IMR-90 (cell line): ENCODE measurements at regions of chr10 and their contacts with region 1.

Region 1: DNA sequence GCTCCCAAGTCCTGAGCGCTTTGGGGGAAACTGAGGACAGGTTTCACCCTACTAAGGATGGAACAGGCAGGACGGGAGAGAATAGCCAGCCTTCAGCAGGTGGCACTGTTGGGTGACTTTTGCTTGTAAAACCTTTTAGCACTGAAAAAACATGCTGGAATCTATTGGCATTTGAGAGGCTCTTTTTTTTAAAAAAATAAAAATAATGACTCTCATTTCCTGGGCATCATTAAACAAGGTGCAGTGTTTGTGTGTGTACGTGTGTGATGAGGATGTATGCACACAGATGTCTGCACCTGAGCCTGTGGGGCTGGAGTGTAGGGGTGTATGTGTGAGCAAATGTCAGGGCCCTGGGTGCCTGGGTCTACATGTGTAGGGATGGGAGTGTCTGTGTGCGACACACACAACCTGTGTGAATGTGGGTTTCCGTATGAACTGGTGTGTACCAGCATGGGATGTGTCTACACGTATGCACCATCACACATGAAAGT is 177.9 kb downstream of the RPS24 start:
- DNase-seq: peak; percentile 67
- ATAC-seq: peak; percentile 77
- H3K4me3 ChIP-seq: no peak overlapping the region
- H3K27ac ChIP-seq: no peak overlapping the region
- H3K4me1 ChIP-seq: peaks cover 12% of the 10 kb centered on the region
- H3K27me3 ChIP-seq: peaks cover 3% of the 10 kb centered on the region; the same call in 1 of the 2 replicates
- CTCF ChIP-seq: peak; percentile 81
- POLR2A ChIP-seq: no peak
- RAD21 ChIP-seq: peak; percentile 90

Region 2: GRCh38 chr10:78081292-78081691 is 130.3 kb before region 1 on chr10:
- CTCF ChIA-PET with region 1: no interaction called
- POLR2A ChIA-PET with region 1: no interaction called
- dilution Hi-C with region 1: no loop called
- in situ Hi-C with region 1: no loop called
- intact Hi-C with region 1: no loop called
- DNase-seq: no peak
- ATAC-seq: no peak
- H3K4me3 ChIP-seq: no peak overlapping the region
- H3K27ac ChIP-seq: no peak overlapping the region
- H3K4me1 ChIP-seq: no peaks in the 10 kb centered on the region
- H3K27me3 ChIP-seq: peaks cover 56% of the 10 kb centered on the region
- CTCF ChIP-seq: no peak
- POLR2A ChIP-seq: no peak
- RAD21 ChIP-seq: no peak

Region 3: GRCh38 chr10:78236416-78237015 is 24.9 kb after region 1 on chr10:
- CTCF ChIA-PET with region 1: no interaction called
- POLR2A ChIA-PET with region 1: no interaction called
- dilution Hi-C with region 1: no loop called
- in situ Hi-C with region 1: no loop called
- intact Hi-C with region 1: loop called (anchors 1 kb)
- DNase-seq: no peak
- ATAC-seq: no peak
- H3K4me3 ChIP-seq: no peak overlapping the region
- H3K27ac ChIP-seq: no peak overlapping the region
- H3K4me1 ChIP-seq: no peaks in the 10 kb centered on the region; the same call in 1 of the 2 replicates
- H3K27me3 ChIP-seq: no peaks in the 10 kb centered on the region
- CTCF ChIP-seq: no peak
- POLR2A ChIP-seq: no peak
- RAD21 ChIP-seq: no peak

Region 4: DNA sequence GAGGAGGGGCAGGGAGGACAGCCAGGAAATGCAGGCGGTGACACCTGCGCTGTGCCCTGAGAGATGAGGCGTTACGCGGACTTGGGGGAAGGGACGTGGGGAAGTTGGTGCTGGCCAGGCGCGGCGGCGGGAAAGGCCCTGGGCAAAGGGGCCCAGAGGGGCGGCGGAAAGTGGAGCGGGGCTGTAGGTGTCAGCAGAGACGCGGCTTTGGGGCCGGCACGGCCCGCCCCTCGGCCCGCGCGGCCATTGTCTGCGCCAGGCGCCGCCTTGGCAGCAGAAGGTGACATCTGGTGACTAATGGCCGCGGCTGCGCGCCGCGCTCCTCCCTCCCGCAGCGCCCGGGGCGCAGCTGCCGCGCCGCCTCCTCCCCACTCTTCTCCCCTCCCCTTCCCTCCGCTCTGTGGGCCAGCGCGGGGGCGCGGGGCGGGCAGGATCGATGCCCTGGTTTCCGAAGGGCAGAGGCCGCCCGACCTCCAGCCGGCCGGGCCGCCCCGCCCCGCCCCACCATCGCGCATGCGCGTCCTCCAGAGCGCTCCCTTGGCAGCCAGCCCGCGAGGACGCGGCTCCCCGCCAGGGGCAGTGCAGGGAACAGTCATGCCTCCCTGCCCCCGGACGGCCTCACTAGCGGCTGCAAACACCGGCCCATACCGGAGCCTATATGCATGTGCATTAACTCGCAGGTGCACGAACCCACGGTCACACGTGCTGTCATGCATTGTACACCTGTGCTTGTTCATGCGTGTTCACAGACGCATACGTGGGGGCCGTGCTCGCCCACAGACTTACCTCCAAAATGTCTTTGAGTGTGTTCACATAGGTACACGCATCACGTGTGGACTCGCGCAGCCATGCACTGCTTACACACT is 91.6 kb after region 1 on chr10:
- CTCF ChIA-PET with region 1: interaction called, 4 read pairs
- POLR2A ChIA-PET with region 1: no interaction called
- dilution Hi-C with region 1: no loop called
- in situ Hi-C with region 1: no loop called
- intact Hi-C with region 1: loop called (anchors 5 kb)
- DNase-seq: peak; percentile 85
- ATAC-seq: peak; percentile 100
- H3K4me3 ChIP-seq: peak overlapping the region; percentile 62
- H3K27ac ChIP-seq: peak overlapping the region; percentile 69
- H3K4me1 ChIP-seq: peaks cover 3% of the 10 kb centered on the region; the same call in 1 of the 2 replicates
- H3K27me3 ChIP-seq: 0 out of 2 replicates have a peak, but pooled peaks cover 2% of the 10 kb centered on the region
- CTCF ChIP-seq: peak; percentile 75
- POLR2A ChIP-seq: peak; percentile 63; the same call in 1 of the 2 replicates
- RAD21 ChIP-seq: peak; percentile 77

Region 5: DNA sequence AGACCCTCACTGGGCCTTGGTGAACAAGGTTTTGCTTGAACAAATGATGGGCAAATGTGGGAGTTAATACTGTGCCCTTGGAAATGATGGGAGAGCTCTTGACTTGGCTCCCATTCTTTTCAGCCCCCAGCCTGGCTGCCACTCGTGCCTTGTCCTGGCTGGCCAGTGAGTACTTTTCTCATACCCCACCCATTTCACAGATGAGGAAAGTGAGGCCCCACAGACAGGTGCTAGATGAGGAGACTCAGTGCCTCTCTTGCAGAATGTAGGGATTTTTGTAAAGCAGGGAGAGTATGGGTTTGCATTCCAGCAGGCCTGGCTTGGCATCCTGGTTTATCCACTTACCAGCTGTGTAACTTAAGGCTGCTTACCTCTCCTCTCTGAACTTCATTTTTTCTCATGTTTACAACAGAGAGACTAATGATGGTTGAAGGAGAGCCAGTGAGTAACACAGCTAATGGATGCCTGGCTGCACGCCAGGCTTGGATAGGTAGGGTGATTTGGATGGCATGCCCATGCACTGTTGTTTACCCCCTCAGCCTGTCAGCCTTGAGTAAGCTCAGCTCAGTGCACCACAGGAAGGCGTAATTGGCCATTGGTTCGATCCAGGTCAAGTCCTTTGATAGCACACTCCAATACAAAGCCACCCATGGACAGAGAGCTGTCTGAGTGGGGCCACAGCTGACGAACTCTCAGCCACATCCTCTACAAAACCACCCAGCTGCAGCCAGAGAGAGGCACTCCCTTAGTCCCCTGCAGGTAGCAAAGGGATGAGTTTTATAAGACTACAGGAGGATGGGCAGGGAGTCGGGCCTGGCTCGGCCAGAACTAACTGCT is 258.9 kb after region 1 on chr10:
- CTCF ChIA-PET with region 1: no interaction called
- POLR2A ChIA-PET with region 1: no interaction called
- dilution Hi-C with region 1: no loop called
- in situ Hi-C with region 1: no loop called
- intact Hi-C with region 1: no loop called
- DNase-seq: peak; percentile 18
- ATAC-seq: peak; percentile 27
- H3K4me3 ChIP-seq: no peak overlapping the region
- H3K27ac ChIP-seq: no peak overlapping the region
- H3K4me1 ChIP-seq: peaks cover 4% of the 10 kb centered on the region; the same call in 1 of the 2 replicates
- H3K27me3 ChIP-seq: no peaks in the 10 kb centered on the region
- CTCF ChIP-seq: no peak
- POLR2A ChIP-seq: no peak
- RAD21 ChIP-seq: no peak

Region 6: DNA sequence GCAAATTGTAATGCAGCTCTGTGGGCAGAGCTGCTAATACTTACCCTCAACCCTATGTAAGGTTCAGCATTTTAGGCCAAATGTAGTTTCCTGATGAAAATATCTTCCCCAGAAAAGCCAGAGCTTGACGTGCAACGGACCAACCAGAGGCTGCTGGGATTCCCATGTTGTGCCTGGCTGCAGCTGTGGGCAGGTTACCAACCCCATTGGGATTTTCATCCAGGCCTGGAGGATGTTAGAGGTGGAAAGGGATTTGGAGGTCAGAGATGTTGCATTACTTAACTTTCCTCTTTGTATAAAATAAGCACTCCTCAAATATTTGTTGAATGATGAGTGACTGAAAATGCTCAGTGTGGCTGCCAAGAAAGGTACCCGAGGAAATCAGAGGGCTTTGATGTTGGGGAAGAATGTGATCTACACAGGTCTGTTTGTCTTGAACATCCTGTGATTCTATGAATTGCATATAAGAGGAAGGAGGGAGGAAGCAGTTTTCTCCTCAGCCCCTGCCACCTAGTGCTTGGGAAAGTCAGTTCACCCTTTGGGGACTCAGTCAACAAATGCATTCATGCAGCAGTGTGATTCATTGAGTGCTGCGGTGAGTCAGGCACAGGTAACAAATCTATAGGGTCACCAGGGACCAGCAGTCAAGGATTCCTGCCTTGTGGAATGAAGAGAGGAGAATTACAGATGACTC is 309.3 kb after region 1 on chr10:
- CTCF ChIA-PET with region 1: no interaction called
- POLR2A ChIA-PET with region 1: no interaction called
- dilution Hi-C with region 1: no loop called
- in situ Hi-C with region 1: no loop called
- intact Hi-C with region 1: loop called (anchors 2 kb)
- DNase-seq: peak; percentile 65
- ATAC-seq: peak; percentile 72
- H3K4me3 ChIP-seq: no peak overlapping the region
- H3K27ac ChIP-seq: no peak overlapping the region
- H3K4me1 ChIP-seq: peaks cover 5% of the 10 kb centered on the region
- H3K27me3 ChIP-seq: no peaks in the 10 kb centered on the region; the same call in 1 of the 2 replicates
- CTCF ChIP-seq: peak; percentile 48
- POLR2A ChIP-seq: no peak
- RAD21 ChIP-seq: peak; percentile 62

Region 7: GRCh38 chr10:78657163-78657861 is 445.7 kb after region 1 on chr10:
- CTCF ChIA-PET with region 1: interaction called, 3 read pairs
- POLR2A ChIA-PET with region 1: no interaction called
- dilution Hi-C with region 1: no loop called
- in situ Hi-C with region 1: no loop called
- intact Hi-C with region 1: loop called (anchors 1 kb)
- DNase-seq: peak; percentile 43
- ATAC-seq: peak; percentile 88
- H3K4me3 ChIP-seq: no peak overlapping the region
- H3K27ac ChIP-seq: no peak overlapping the region
- H3K4me1 ChIP-seq: 0 out of 2 replicates have a peak, but pooled peaks cover 2% of the 10 kb centered on the region
- H3K27me3 ChIP-seq: peaks cover 5% of the 10 kb centered on the region; the same call in 1 of the 2 replicates
- CTCF ChIP-seq: peak; percentile 73
- POLR2A ChIP-seq: no peak
- RAD21 ChIP-seq: peak; percentile 78

Region 8: GRCh38 chr10:78972947-78973900 is 761.6 kb after region 1 on chr10:
- CTCF ChIA-PET with region 1: no interaction called
- POLR2A ChIA-PET with region 1: no interaction called
- dilution Hi-C with region 1: no loop called
- in situ Hi-C with region 1: no loop called
- intact Hi-C with region 1: loop called (anchors 10 kb)
- DNase-seq: peak; percentile 95
- ATAC-seq: peak; percentile 69
- H3K4me3 ChIP-seq: 0 out of 2 replicates have a peak overlapping the region, but pooled peaks have one; percentile 3
- H3K27ac ChIP-seq: peak overlapping the region; percentile 98
- H3K4me1 ChIP-seq: peaks cover 38% of the 10 kb centered on the region
- H3K27me3 ChIP-seq: no peaks in the 10 kb centered on the region
- CTCF ChIP-seq: no peak
- POLR2A ChIP-seq: peak; percentile 69
- RAD21 ChIP-seq: no peak; the same call in 1 of the 2 replicates

Region 9: DNA sequence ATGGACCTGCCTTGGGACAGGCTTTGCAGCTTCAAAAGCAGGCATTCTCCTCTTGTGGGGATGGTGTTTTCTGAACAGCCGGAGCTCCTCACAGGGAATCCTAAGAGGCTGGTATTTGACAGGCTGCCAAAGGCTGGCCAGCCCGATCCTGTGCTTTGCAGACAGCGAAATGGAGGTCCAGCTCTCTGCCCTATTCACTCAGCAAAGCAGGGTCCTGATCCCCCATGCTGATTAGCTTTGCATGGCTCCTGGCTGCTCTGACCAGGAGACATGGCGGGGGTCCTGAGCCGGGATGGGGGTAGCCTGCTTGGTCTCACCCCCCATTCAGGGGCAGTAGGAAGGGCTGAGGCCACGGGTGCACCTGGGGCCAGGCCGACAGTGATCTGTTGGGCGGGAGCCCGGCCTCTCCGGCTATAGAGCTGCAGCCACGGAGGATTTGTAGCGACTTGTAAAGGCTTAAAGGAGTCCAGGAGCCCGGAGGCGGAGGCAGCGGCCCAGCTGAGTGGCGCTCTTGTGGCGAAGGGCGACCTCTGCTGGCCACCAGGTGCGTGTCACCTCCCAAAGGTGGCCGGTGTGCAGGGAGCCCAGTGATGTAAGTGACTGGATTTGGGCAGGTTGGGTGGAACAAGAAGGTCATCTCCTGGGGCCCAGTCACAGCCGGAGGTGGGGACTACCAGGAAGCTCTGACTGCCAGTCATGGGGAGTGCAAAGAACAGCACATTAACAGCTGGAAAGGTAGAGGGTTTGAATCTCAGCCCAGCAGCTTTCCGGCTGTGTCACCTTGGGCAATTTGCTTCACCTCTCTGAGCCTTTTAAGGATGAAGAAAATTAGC is 983.7 kb after region 1 on chr10:
- CTCF ChIA-PET with region 1: no interaction called
- POLR2A ChIA-PET with region 1: no interaction called
- dilution Hi-C with region 1: no loop called
- in situ Hi-C with region 1: loop called (anchors 10 kb)
- intact Hi-C with region 1: loop called (anchors 1 kb)
- DNase-seq: peak; percentile 81
- ATAC-seq: peak; percentile 78
- H3K4me3 ChIP-seq: no peak overlapping the region
- H3K27ac ChIP-seq: peak overlapping the region; percentile 76
- H3K4me1 ChIP-seq: peaks cover 35% of the 10 kb centered on the region
- H3K27me3 ChIP-seq: no peaks in the 10 kb centered on the region
- CTCF ChIP-seq: peak; percentile 88
- POLR2A ChIP-seq: peak; percentile 59; the same call in 1 of the 2 replicates
- RAD21 ChIP-seq: peak; percentile 96